Aorta (tissue), 5 donors: ENCODE measurements at regions of chr9 and their contacts with region 1.

Region 1: GRCh38 chr9:100129772-100130171 is 30.7 kb downstream of the INVS start:
- DNase-seq: no peak
- ATAC-seq: no peak
- H3K4me3 ChIP-seq: no peak overlapping the region
- H3K27ac ChIP-seq: no peak overlapping the region
- H3K4me1 ChIP-seq: no peaks in the 10 kb centered on the region
- H3K27me3 ChIP-seq: no peaks in the 10 kb centered on the region

Region 2: GRCh38 chr9:100066539-100066938 is 63.2 kb before region 1 on chr9:
- intact Hi-C with region 1: loop called in 1 of 2 experiments (anchors 10 kb)
- DNase-seq: no peak
- ATAC-seq: peak; percentile 63
- H3K4me3 ChIP-seq: no peak overlapping the region
- H3K27ac ChIP-seq: no peak overlapping the region
- H3K4me1 ChIP-seq: no peaks in the 10 kb centered on the region
- H3K27me3 ChIP-seq: no peaks in the 10 kb centered on the region

Region 3: GRCh38 chr9:100167915-100168654 is 38.3 kb after region 1 on chr9:
- intact Hi-C with region 1: no loop called
- DNase-seq: no peak
- ATAC-seq: no peak
- H3K4me3 ChIP-seq: no peak overlapping the region
- H3K27ac ChIP-seq: no peak overlapping the region
- H3K4me1 ChIP-seq: peaks cover 0 to 4% of the 10 kb centered on the region in 2 donors
- H3K27me3 ChIP-seq: no peaks in the 10 kb centered on the region